ENCODE measurements at regions of chr11 and their contacts with region 1.

Region 1: DNA sequence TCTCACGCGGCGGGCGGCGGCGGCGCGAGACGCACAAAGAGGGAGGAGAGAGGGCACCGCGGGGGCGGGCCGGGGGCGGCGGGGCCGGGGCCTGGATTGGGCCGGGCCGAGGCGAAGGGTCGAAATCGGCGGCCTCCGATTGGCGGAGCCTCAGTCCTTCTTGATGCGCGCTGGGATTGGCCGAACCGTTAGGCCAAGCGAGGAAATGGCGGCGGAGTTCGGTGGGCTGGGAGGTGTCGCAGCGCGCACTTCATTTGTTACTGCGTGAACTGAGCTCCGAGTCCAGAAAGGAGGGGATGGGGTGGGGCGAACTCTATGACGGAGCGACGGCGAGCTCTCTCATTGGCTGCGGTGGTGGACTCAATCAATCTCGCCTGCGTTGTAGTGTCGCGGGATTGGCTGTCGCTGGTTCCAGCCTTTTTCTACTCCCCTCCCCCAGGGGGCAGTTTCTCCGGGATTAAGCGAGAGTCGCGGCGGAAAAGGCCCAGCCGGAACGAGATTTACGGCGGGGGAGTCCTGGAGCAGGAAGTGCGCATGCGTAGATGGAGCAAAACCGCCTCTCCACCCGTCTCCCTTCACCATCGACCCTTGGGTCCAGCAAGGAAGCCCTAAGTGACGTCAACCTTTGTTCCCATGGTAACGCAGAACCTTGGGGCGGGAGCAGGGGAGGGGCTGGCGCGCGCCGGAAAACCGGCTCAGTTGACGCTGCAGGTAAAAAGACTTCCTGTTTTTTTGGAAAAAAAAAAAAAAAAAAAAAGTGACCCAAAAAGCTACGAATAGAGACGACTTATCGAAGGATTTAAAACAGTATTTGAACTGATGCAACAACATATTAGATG is at the start of gene SF1:
- DNase-seq: peak; percentile 99 to 100 (median 100)
- H3K4me3 ChIP-seq: peak within 1 kb of the TSS; percentile 94 to 98
- H3K4me3 Mint-ChIP-seq: peak within 1 kb of the TSS; percentile 89 to 96 (median 94)
- H3K27ac ChIP-seq: peak within 1 kb of the TSS; percentile 98
- H3K27ac Mint-ChIP-seq: peak within 1 kb of the TSS; percentile 98 to 100 (median 98)
- H3K4me1 ChIP-seq: peaks cover 57% of the 10 kb centered on the region
- H3K4me1 Mint-ChIP-seq: peaks cover 41 to 70% (median 55%) of the 10 kb centered on the region in 4 donors
- H3K27me3 ChIP-seq: no peaks in the 10 kb centered on the region
- H3K27me3 Mint-ChIP-seq: peaks cover 0 to 4% of the 10 kb centered on the region in 2 donors
- total RNA-seq, gene SF1: 805 to 832 TPM

Region 2: GRCh38 chr11:63687845-63688244 is 1090.9 kb before region 1 on chr11:
- CTCF ChIA-PET with region 1: no interaction called
- POLR2A ChIA-PET with region 1: no interaction called
- intact Hi-C with region 1: no loop called
- DNase-seq: no peak
- H3K4me3 ChIP-seq: no peak overlapping the region
- H3K4me3 Mint-ChIP-seq: no peak overlapping the region
- H3K27ac ChIP-seq: no peak overlapping the region
- H3K27ac Mint-ChIP-seq: no peak overlapping the region
- H3K4me1 ChIP-seq: peaks cover 7% of the 10 kb centered on the region
- H3K4me1 Mint-ChIP-seq: peaks cover 17 to 31% (median 18%) of the 10 kb centered on the region in 4 donors
- H3K27me3 ChIP-seq: no peaks in the 10 kb centered on the region
- H3K27me3 Mint-ChIP-seq: no peaks in the 10 kb centered on the region

Region 3: DNA sequence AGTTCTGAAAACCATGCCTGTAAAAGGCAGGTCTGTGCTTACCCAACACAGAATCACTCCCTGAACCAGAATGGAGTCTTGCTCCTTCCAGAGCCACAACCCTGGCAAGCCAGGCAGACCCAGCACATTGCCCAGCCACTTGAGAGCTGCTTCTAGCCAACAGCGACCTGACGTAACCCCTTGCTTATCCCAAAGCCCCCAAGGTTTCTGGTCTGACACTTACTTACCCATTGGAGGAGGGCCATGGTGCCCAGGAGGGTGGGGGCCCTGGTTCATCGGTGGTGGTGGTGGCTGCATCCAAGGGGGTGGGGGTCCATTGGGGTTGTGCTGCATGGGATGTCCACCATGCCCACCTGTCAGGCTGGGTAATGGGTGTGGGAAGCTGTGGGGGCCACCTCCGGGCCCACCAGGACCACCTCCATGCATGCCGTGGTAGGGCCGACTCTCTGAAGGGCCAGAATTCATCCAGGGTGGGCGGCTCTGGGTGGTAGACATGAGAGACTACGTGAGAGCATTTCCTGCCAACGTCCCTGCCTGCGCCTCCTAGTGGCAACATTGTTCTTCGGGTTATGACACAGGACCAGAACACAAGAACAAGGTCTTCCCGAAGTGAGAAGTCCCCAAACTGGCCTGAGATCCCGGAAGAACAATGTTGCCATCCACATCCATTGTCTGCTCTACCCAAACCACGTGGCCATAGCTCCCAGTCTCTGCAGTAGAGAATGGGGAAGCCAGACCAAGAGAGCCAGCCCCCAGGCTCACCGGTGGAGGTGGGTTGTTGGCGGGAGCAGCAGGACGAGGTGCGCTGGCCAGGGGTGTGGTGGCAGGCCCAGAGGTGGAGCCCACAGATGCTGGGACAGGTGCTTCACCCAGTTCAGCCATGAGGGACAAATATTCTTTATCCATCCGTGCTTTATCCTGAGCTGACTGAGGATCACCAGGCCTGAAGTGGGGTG is 11.1 kb before region 1 on chr11:
- CTCF ChIA-PET with region 1: interaction called, 17 read pairs
- POLR2A ChIA-PET with region 1: interaction called, 398 read pairs
- intact Hi-C with region 1: loop called (anchors 2 kb)
- DNase-seq: peak; percentile 74 to 81 (median 78)
- H3K4me3 ChIP-seq: peak overlapping the region in 1 of 2 donors; percentile 11
- H3K4me3 Mint-ChIP-seq: peak overlapping the region; percentile 36 to 85 (median 71)
- H3K27ac ChIP-seq: peak overlapping the region; percentile 57
- H3K27ac Mint-ChIP-seq: peak overlapping the region; percentile 89 to 97 (median 94)
- H3K4me1 ChIP-seq: peaks cover 97% of the 10 kb centered on the region
- H3K4me1 Mint-ChIP-seq: peaks cover 62 to 96% (median 84%) of the 10 kb centered on the region in 4 donors
- H3K27me3 ChIP-seq: no peaks in the 10 kb centered on the region
- H3K27me3 Mint-ChIP-seq: no peaks in the 10 kb centered on the region

Region 4: DNA sequence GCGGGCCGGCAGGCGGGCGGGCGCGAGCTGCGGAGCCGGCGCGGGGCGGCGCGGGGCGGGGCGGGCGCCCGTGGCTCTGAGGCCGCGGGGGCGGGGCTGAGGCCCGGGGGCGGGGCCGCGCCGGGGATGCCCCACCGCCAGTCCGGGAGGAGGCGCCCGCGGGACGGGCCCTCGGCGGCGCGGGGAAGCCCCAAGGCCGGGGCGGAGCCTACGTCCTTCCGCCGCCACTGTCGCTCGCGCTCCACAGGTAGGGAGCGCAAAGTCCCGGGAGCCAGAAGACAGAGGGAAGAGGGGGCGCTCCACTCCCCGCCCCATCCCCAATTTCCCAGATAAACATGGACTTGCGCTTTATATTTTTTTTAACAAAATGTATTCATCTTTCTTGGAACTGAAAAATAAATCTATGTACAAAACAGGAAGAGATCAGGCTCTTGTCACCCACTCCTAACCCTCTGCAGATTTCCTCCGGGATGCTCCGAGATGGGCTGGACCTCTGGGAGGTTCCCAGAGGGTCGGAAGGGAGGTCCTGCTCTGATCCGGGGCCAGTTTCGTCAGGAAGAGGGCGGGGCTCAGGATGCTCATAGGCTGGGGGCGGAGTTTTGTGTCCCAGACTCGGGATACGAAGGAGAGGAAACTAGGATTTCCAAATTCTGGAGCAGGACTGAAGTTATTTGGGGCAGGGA is 24.6 kb after region 1 on chr11 and contains the start of gene MAP4K2:
- CTCF ChIA-PET with region 1: interaction called, 7 read pairs
- POLR2A ChIA-PET with region 1: interaction called, 143 read pairs
- intact Hi-C with region 1: loop called (anchors 1 kb)
- DNase-seq: peak; percentile 84 to 91 (median 89)
- H3K4me3 ChIP-seq: peak within 1 kb of the TSS; percentile 79
- H3K4me3 Mint-ChIP-seq: peak within 1 kb of the TSS; percentile 87 to 92 (median 90)
- H3K27ac ChIP-seq: peak within 1 kb of the TSS; percentile 93
- H3K27ac Mint-ChIP-seq: peak within 1 kb of the TSS; percentile 94 to 97 (median 96)
- H3K4me1 ChIP-seq: peaks cover 35% of the 10 kb centered on the region
- H3K4me1 Mint-ChIP-seq: peaks cover 9 to 48% (median 24%) of the 10 kb centered on the region in 4 donors
- H3K27me3 ChIP-seq: no peaks in the 10 kb centered on the region
- H3K27me3 Mint-ChIP-seq: no peaks in the 10 kb centered on the region
- total RNA-seq, gene MAP4K2: 122 to 128 TPM

Region 5: GRCh38 chr11:64846998-64847666 is 68.4 kb after region 1 on chr11:
- CTCF ChIA-PET with region 1: interaction called, 5 read pairs
- POLR2A ChIA-PET with region 1: interaction called, 12 read pairs
- intact Hi-C with region 1: loop called (anchors 2 kb)
- DNase-seq: peak; percentile 84 to 90 (median 88)
- H3K4me3 ChIP-seq: no peak overlapping the region
- H3K4me3 Mint-ChIP-seq: peak overlapping the region in 4 of 8 donors; percentile 20 to 62 (median 34)
- H3K27ac ChIP-seq: peak overlapping the region; percentile 23
- H3K27ac Mint-ChIP-seq: peak overlapping the region; percentile 11 to 89 (median 82)
- H3K4me1 ChIP-seq: peaks cover 65% of the 10 kb centered on the region
- H3K4me1 Mint-ChIP-seq: peaks cover 35 to 64% (median 49%) of the 10 kb centered on the region in 4 donors
- H3K27me3 ChIP-seq: no peaks in the 10 kb centered on the region
- H3K27me3 Mint-ChIP-seq: no peaks in the 10 kb centered on the region

Region 6: DNA sequence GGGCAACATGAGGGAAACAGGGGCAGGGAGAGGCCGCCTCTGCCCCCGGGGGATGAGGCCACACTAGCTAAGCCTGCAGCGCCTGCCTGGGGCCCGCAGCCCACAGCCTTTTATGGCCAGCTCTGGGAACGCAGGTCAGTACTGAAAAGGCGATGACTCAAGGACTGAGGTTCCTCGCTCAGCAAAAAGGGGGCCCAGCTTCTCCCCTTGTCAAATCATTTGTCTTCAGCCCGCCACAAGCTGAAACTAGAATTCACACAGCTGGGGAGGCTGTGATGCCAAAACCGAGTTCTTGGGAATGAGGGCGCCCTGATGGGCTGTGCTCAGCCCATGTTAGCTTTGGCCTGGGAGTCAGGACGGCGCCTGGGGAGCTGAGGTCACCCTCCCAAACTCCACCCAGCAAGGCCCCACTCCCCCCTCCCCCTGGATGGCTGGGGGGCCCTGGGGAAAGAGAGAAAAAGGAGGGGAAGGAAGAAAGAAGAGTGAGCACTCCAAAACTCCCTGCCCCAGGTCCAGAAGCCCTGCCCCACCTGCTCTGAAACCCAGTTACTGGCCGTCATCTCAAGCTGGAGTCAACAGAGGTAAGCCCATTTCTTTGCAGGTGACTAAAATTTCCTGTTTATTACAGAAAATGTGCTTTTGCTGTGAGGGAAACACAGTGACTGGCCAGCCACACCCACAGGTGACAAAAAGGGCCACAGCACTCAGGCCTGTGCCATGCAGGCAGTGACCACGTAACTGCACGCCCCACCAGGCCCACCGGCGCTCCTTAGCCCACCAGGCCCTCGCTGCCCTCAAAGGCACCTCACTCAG is 86.0 kb after region 1 on chr11:
- CTCF ChIA-PET with region 1: no interaction called
- POLR2A ChIA-PET with region 1: interaction called, 17 read pairs
- intact Hi-C with region 1: no loop called
- DNase-seq: peak in 2 of 5 donors; percentile 24 to 64
- H3K4me3 ChIP-seq: peak overlapping the region; percentile 40 to 59
- H3K4me3 Mint-ChIP-seq: peak overlapping the region; percentile 64 to 91 (median 82)
- H3K27ac ChIP-seq: peak overlapping the region; percentile 68
- H3K27ac Mint-ChIP-seq: peak overlapping the region; percentile 76 to 99 (median 95)
- H3K4me1 ChIP-seq: peaks cover 99% of the 10 kb centered on the region
- H3K4me1 Mint-ChIP-seq: peaks cover 53 to 95% (median 78%) of the 10 kb centered on the region in 4 donors
- H3K27me3 ChIP-seq: no peaks in the 10 kb centered on the region
- H3K27me3 Mint-ChIP-seq: no peaks in the 10 kb centered on the region

Region 7: DNA sequence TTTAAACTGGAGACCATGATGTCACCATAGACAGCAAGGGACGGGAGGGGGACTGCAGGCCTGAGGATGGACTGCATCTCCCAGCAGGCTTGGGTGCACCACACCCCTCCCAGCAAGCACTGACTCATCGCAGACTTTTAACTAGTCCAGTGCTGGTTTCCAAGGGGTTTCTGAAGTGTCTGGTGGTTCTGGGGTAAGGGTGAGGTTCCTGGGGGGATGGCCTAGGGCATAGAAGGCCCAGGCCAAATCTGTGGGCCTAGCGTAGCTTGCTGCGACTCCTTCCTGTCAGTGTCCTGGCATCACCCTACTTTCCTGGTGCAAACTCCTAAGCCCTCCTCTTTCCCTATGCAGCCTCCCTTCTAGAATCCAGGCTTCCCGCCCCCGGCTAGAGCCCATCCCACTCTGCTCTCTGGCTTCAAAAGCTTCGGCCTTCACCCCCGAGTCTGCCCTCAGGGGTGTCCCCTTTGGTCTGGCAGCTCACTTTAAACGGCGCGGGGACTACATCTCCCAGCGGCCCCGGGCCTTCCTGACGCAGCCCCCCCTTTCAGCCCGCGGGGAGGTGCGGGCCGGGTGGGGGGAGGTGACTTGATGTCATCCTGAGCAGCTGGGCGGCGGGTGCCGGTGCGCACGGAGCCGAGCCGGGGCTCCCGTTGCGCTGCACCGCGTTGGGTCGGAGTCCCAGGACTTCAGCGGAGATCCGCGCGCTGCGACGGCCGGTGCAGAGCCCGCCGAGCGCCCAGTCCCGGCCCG is 145.6 kb after region 1 on chr11 and contains the start of gene PPP2R5B:
- CTCF ChIA-PET with region 1: no interaction called
- POLR2A ChIA-PET with region 1: interaction called, 12 read pairs
- intact Hi-C with region 1: no loop called
- DNase-seq: peak; percentile 87 to 95 (median 90)
- H3K4me3 ChIP-seq: peak within 1 kb of the TSS; percentile 61 to 85
- H3K4me3 Mint-ChIP-seq: peak within 1 kb of the TSS; percentile 93 to 99 (median 96)
- H3K27ac ChIP-seq: peak within 1 kb of the TSS; percentile 78
- H3K27ac Mint-ChIP-seq: peak within 1 kb of the TSS; percentile 98 to 100 (median 99)
- H3K4me1 ChIP-seq: peaks cover 20% of the 10 kb centered on the region
- H3K4me1 Mint-ChIP-seq: peaks cover 9 to 15% (median 11%) of the 10 kb centered on the region in 4 donors
- H3K27me3 ChIP-seq: no peaks in the 10 kb centered on the region
- H3K27me3 Mint-ChIP-seq: no peaks in the 10 kb centered on the region
- total RNA-seq, gene PPP2R5B: 14.0 to 15.8 TPM

Region 8: DNA sequence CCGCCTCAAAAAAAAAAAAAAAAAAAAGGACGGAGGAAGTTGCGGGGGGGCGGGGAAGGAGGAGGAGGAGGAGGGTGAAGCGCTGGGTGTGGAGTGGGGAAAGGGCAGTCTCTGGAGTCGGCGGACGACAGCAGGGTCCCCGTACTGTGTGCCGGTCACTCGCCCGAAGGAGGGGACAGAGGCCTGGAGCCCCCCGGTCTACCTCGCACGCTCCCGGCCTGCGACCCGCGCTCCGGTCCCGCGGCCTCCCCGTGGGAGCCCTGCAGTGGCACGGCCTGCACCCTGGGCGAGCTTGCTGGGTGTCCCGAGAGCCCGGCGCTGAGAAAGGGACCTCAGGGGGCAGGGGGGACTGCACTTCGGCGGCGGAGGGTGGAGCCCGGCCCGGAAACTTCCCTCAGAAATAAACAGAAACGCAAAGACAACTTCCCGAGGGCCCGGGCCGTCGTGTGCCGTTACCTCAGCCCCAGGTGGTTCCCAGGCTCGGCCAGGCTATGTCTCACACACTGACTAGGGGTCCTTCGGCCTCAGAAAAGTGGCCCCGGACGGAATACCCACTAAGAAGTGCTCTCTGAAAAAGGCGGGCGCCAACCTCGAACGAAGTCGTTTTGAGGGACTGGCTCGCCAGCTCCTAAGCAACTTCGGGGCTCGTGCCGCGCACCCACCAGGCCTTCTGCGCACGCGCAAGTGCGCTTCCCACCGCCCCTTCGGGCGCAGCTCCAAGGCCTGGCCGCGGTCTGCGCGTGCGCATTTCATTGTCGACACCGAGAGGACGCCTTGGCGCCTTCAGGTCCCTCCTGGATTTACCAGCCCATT is 192.9 kb after region 1 on chr11 and contains the start of gene MAJIN:
- CTCF ChIA-PET with region 1: no interaction called
- POLR2A ChIA-PET with region 1: no interaction called
- intact Hi-C with region 1: no loop called
- DNase-seq: peak; percentile 85 to 90 (median 87)
- H3K4me3 ChIP-seq: peak within 1 kb of the TSS in 1 of 2 donors; percentile 20
- H3K4me3 Mint-ChIP-seq: peak within 1 kb of the TSS; percentile 73 to 83 (median 75)
- H3K27ac ChIP-seq: peak within 1 kb of the TSS; percentile 15
- H3K27ac Mint-ChIP-seq: peak within 1 kb of the TSS; percentile 50 to 90 (median 77)
- H3K4me1 ChIP-seq: peaks cover 11% of the 10 kb centered on the region
- H3K4me1 Mint-ChIP-seq: peaks cover 7 to 25% (median 18%) of the 10 kb centered on the region in 4 donors
- H3K27me3 ChIP-seq: no peaks in the 10 kb centered on the region
- H3K27me3 Mint-ChIP-seq: no peaks in the 10 kb centered on the region
- total RNA-seq, gene MAJIN: 0.44 to 0.91 TPM

Region 9: DNA sequence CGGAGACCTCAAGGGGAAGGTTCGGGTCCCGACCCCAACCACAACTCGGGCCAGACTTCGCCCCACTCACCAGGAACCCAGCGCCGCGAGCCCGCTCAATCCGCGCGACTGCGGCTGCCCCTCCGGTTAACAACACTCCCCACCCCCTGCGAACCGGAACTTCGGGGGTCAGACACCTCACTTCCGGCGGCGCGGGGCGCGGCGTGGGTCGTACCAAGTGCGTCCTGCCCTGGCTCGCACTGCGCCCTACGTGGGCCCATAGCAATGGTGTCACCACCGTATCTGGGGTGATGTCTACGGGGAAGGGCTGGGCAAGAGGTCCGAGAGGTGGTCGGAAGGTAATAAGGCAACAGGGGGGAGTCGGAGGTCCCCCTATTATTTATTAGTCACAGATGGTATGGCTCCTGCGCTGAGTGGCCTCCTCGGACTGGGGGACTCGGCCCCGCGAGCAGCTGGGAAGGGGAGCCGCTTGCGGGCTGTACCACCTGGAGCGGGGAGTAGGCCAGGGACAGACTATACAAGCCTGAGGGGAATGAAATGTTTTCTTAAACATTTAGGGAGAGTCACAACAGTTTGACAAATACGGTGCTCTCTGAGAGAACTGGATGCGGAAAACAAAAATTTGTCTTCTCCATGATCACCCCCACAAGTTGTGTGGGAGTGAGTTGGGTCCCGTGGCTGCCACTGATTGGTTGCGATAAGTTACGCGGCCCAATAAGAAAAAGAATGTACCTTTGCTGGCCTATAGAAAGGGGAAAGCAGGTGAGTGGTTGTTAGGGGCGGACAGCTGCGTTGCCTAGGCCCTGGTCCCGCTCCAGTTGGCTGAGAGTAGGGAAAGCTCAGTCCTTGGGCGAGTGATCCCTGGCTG is 355.9 kb after region 1 on chr11 and contains the start of gene SYVN1:
- CTCF ChIA-PET with region 1: no interaction called
- POLR2A ChIA-PET with region 1: interaction called, 11 read pairs
- intact Hi-C with region 1: no loop called
- DNase-seq: peak; percentile 92 to 95 (median 94)
- H3K4me3 ChIP-seq: peak within 1 kb of the TSS; percentile 68 to 99
- H3K4me3 Mint-ChIP-seq: peak within 1 kb of the TSS; percentile 97 to 100 (median 98)
- H3K27ac ChIP-seq: peak within 1 kb of the TSS; percentile 99
- H3K27ac Mint-ChIP-seq: peak within 1 kb of the TSS; percentile 99 to 100 (median 100)
- H3K4me1 ChIP-seq: peaks cover 30% of the 10 kb centered on the region
- H3K4me1 Mint-ChIP-seq: peaks cover 23 to 48% (median 33%) of the 10 kb centered on the region in 4 donors
- H3K27me3 ChIP-seq: no peaks in the 10 kb centered on the region
- H3K27me3 Mint-ChIP-seq: no peaks in the 10 kb centered on the region
- total RNA-seq, gene SYVN1: 74.0 to 76.5 TPM

Region 10: GRCh38 chr11:65150509-65151271 is 372.0 kb after region 1 on chr11:
- CTCF ChIA-PET with region 1: no interaction called
- POLR2A ChIA-PET with region 1: no interaction called
- intact Hi-C with region 1: no loop called
- DNase-seq: no peak
- H3K4me3 ChIP-seq: no peak overlapping the region
- H3K4me3 Mint-ChIP-seq: no peak overlapping the region
- H3K27ac ChIP-seq: no peak overlapping the region
- H3K27ac Mint-ChIP-seq: peak overlapping the region in 2 of 7 donors; percentile 10 to 65
- H3K4me1 ChIP-seq: no peaks in the 10 kb centered on the region
- H3K4me1 Mint-ChIP-seq: peaks cover 0 to 4% (median 1%) of the 10 kb centered on the region in 4 donors
- H3K27me3 ChIP-seq: no peaks in the 10 kb centered on the region
- H3K27me3 Mint-ChIP-seq: no peaks in the 10 kb centered on the region

Measured in CD4-positive, alpha-beta memory T cell (primary cell).